ENCODE measurements at regions of chr21 and their contacts with region 1.

Region 1: GRCh38 chr21:32914424-32915039 is 111.2 kb upstream of the OLIG2 start:
- DNase-seq: peak in 4 of 14 experiments; percentile 25 to 54 (median 30)
- ATAC-seq: peak; percentile 82
- H3K4me3 ChIP-seq: peak overlapping the region; percentile 6
- H3K4me3 Mint-ChIP-seq: peak overlapping the region; percentile 3
- H3K27ac ChIP-seq: no peak overlapping the region
- H3K27ac Mint-ChIP-seq: peak overlapping the region; percentile 34
- H3K4me1 ChIP-seq: peaks cover 24% of the 10 kb centered on the region
- H3K4me1 Mint-ChIP-seq: peaks cover 41% of the 10 kb centered on the region
- H3K27me3 ChIP-seq: no peaks in the 10 kb centered on the region
- H3K27me3 Mint-ChIP-seq: no peaks in the 10 kb centered on the region
- CTCF ChIP-seq: no peak

Region 2: DNA sequence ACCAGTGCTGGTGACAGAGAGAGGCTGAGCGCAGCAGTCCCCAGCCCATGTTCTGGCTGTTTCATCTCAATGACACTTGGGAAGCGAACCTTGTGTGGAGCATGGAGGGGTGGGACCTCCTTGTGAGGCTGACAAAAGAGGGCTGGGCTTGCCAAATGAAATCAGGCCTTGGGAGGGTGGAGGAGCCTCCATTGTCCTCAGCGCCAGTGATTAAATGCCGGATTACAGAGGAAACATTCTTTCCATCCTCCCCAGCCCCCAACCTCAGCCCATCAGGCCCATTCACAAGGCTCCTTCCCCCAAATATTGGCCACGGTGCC is 79.7 kb before region 1 on chr21:
- CTCF ChIA-PET with region 1: no interaction called
- POLR2A ChIA-PET with region 1: no interaction called
- intact Hi-C with region 1: no loop called
- DNase-seq: no peak
- ATAC-seq: no peak
- H3K4me3 ChIP-seq: no peak overlapping the region
- H3K4me3 Mint-ChIP-seq: no peak overlapping the region
- H3K27ac ChIP-seq: no peak overlapping the region
- H3K27ac Mint-ChIP-seq: no peak overlapping the region
- H3K4me1 ChIP-seq: no peaks in the 10 kb centered on the region
- H3K4me1 Mint-ChIP-seq: no peaks in the 10 kb centered on the region
- H3K27me3 ChIP-seq: peaks cover 5 to 7% of the 10 kb centered on the region in 2 experiments
- H3K27me3 Mint-ChIP-seq: peaks cover 27% of the 10 kb centered on the region
- CTCF ChIP-seq: no peak

Region 3: GRCh38 chr21:32886339-32886738 is 28.2 kb before region 1 on chr21:
- CTCF ChIA-PET with region 1: no interaction called
- POLR2A ChIA-PET with region 1: no interaction called
- intact Hi-C with region 1: no loop called
- DNase-seq: peak in 13 of 14 experiments; percentile 2 to 75 (median 8)
- ATAC-seq: peak; percentile 67
- H3K4me3 ChIP-seq: peak overlapping the region; percentile 51
- H3K4me3 Mint-ChIP-seq: peak overlapping the region; percentile 91
- H3K27ac ChIP-seq: peak overlapping the region in 1 of 2 donors; percentile 45
- H3K27ac Mint-ChIP-seq: peak overlapping the region; percentile 68
- H3K4me1 ChIP-seq: peaks cover 12% of the 10 kb centered on the region
- H3K4me1 Mint-ChIP-seq: peaks cover 11% of the 10 kb centered on the region
- H3K27me3 ChIP-seq: no peaks in the 10 kb centered on the region
- H3K27me3 Mint-ChIP-seq: no peaks in the 10 kb centered on the region
- CTCF ChIP-seq: no peak

Region 4: DNA sequence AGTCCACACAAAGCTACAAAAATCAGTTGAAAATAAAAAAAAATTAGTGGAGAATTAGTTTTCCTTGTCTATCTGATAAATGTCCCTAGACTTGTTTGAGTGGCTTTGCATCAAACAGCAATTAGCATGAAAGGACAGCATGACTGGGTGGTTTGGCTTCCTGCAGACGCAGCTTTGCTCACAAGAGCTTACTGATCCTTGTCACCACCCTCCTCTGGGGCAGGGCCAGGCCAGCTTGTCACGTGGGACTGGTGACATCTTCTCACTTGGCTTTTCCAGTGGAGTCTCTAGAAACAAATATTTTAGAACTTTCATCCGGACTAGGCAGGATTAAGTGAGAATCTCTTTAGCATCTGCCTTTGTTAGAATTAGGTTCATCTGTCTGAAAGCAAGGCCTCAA is 35.2 kb after region 1 on chr21:
- CTCF ChIA-PET with region 1: no interaction called
- POLR2A ChIA-PET with region 1: interaction called, 3 read pairs
- intact Hi-C with region 1: loop called in 1 of 2 experiments (anchors 5 kb)
- DNase-seq: no peak
- ATAC-seq: no peak
- H3K4me3 ChIP-seq: no peak overlapping the region
- H3K4me3 Mint-ChIP-seq: no peak overlapping the region
- H3K27ac ChIP-seq: no peak overlapping the region
- H3K27ac Mint-ChIP-seq: no peak overlapping the region
- H3K4me1 ChIP-seq: no peaks in the 10 kb centered on the region
- H3K4me1 Mint-ChIP-seq: no peaks in the 10 kb centered on the region
- H3K27me3 ChIP-seq: no peaks in the 10 kb centered on the region
- H3K27me3 Mint-ChIP-seq: peaks cover 20% of the 10 kb centered on the region
- CTCF ChIP-seq: no peak